ENCODE measurements at regions of chr6 and their contacts with region 1.

Region 1: DNA sequence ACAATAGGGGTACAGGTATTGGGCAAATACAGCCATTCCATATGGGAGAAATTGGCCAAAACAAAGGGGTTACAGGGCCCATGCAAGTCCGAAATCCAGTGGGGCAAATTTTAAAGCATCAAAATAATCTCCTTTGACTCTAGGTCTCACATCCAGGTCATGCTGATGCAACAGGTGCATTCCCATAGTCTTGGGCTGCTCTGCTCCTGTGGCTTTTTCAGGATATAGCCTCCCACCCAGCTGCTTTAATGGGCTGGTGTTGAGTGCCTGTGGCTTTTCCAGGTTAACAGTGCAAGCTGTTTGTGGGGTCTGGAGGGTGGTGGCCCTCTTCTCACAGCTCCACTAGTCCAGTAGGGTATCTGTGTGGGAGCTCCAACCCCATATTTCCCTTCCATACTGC is 607.1 kb downstream of the MEI4 start:
- DNase-seq: no peak
- ATAC-seq: no peak
- H3K4me3 ChIP-seq: no peak overlapping the region
- H3K27ac ChIP-seq: no peak overlapping the region
- H3K4me1 ChIP-seq: no peaks in the 10 kb centered on the region
- H3K27me3 ChIP-seq: no peaks in the 10 kb centered on the region
- CTCF ChIP-seq: no peak
- POLR2A ChIP-seq: no peak

Region 2: GRCh38 chr6:78324213-78324612 is 64.3 kb after region 1 on chr6:
- intact Hi-C with region 1: loop called (anchors 5 kb)
- DNase-seq: no peak
- ATAC-seq: no peak
- H3K4me3 ChIP-seq: no peak overlapping the region
- H3K27ac ChIP-seq: no peak overlapping the region
- H3K4me1 ChIP-seq: no peaks in the 10 kb centered on the region
- H3K27me3 ChIP-seq: no peaks in the 10 kb centered on the region
- CTCF ChIP-seq: no peak
- POLR2A ChIP-seq: no peak

Region 3: GRCh38 chr6:78390066-78390465 is 130.1 kb after region 1 on chr6:
- intact Hi-C with region 1: no loop called
- DNase-seq: no peak
- ATAC-seq: peak; percentile 52
- H3K4me3 ChIP-seq: no peak overlapping the region
- H3K27ac ChIP-seq: no peak overlapping the region
- H3K4me1 ChIP-seq: no peaks in the 10 kb centered on the region
- H3K27me3 ChIP-seq: no peaks in the 10 kb centered on the region
- CTCF ChIP-seq: no peak
- POLR2A ChIP-seq: no peak

Measured in body of pancreas (tissue), 4 donors.